ENCODE measurements at regions of chr9 and their contacts with region 1.

Region 1: DNA sequence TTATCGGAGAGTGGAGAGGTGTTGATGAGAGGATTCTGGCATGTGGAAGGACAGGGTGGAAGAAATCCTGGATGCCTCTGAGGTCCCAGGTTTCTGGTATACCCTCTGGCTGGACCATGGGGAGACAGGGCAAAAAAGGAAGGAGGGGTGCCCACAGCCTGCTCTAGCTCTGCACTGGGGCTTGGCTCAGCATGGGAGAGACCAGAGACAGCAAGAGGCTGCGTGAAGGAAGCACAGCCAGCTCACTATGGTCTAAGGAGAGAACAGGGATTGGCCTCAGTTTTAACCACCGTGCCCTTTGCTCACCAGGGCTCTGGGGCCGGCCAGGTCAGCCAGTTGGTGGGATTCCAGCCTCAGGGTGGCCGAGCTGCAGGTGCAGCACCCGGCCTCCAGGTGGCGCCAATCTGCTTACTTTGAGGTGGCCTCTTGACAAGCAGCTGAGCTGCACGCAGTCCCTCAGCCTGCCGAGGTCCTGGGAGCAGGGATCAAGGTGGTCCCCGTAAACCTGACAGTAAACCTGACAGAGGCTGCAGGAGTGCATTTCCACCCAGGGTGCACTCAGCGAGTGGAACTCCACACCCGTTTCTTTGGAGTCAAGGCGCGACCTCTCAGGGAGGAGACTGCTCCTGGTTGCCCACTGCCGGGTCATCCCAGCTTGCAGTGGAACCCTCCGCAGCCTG is 25.0 kb upstream of the SPTLC1 start:
- DNase-seq: peak; percentile 61 to 67 (median 64)
- H3K4me3 ChIP-seq: peak overlapping the region in 1 of 2 donors; percentile 23
- H3K4me3 Mint-ChIP-seq: peak overlapping the region in 6 of 8 donors; percentile 45 to 89 (median 72)
- H3K27ac ChIP-seq: no peak overlapping the region
- H3K27ac Mint-ChIP-seq: no peak overlapping the region
- H3K4me1 ChIP-seq: peaks cover 8% of the 10 kb centered on the region
- H3K4me1 Mint-ChIP-seq: peaks cover 3 to 14% (median 10%) of the 10 kb centered on the region in 4 donors
- H3K27me3 ChIP-seq: peaks cover 6% of the 10 kb centered on the region
- H3K27me3 Mint-ChIP-seq: peaks cover 33 to 43% of the 10 kb centered on the region in 2 donors

Region 2: GRCh38 chr9:92122800-92123199 is 17.4 kb before region 1 on chr9:
- CTCF ChIA-PET with region 1: interaction called, 29 read pairs
- POLR2A ChIA-PET with region 1: no interaction called
- intact Hi-C with region 1: no loop called
- DNase-seq: no peak
- H3K4me3 ChIP-seq: no peak overlapping the region
- H3K4me3 Mint-ChIP-seq: no peak overlapping the region
- H3K27ac ChIP-seq: no peak overlapping the region
- H3K27ac Mint-ChIP-seq: no peak overlapping the region
- H3K4me1 ChIP-seq: no peaks in the 10 kb centered on the region
- H3K4me1 Mint-ChIP-seq: no peaks in the 10 kb centered on the region
- H3K27me3 ChIP-seq: no peaks in the 10 kb centered on the region
- H3K27me3 Mint-ChIP-seq: peaks cover 0 to 6% of the 10 kb centered on the region in 2 donors

Region 3: GRCh38 chr9:92208693-92209524 is 68.7 kb after region 1 on chr9:
- CTCF ChIA-PET with region 1: interaction called, 10 read pairs
- POLR2A ChIA-PET with region 1: no interaction called
- intact Hi-C with region 1: no loop called
- DNase-seq: no peak
- H3K4me3 ChIP-seq: no peak overlapping the region
- H3K4me3 Mint-ChIP-seq: no peak overlapping the region
- H3K27ac ChIP-seq: no peak overlapping the region
- H3K27ac Mint-ChIP-seq: peak overlapping the region in 1 of 7 donors; percentile 43
- H3K4me1 ChIP-seq: no peaks in the 10 kb centered on the region
- H3K4me1 Mint-ChIP-seq: no peaks in the 10 kb centered on the region
- H3K27me3 ChIP-seq: no peaks in the 10 kb centered on the region
- H3K27me3 Mint-ChIP-seq: no peaks in the 10 kb centered on the region

Region 4: GRCh38 chr9:92634712-92635605 is 494.7 kb after region 1 on chr9:
- CTCF ChIA-PET with region 1: interaction called, 52 read pairs
- POLR2A ChIA-PET with region 1: no interaction called
- intact Hi-C with region 1: loop called (anchors 1 kb)
- DNase-seq: peak; percentile 40 to 54 (median 46)
- H3K4me3 ChIP-seq: no peak overlapping the region
- H3K4me3 Mint-ChIP-seq: no peak overlapping the region
- H3K27ac ChIP-seq: no peak overlapping the region
- H3K27ac Mint-ChIP-seq: peak overlapping the region in 2 of 7 donors; percentile 24 to 51
- H3K4me1 ChIP-seq: no peaks in the 10 kb centered on the region
- H3K4me1 Mint-ChIP-seq: no peaks in the 10 kb centered on the region
- H3K27me3 ChIP-seq: no peaks in the 10 kb centered on the region
- H3K27me3 Mint-ChIP-seq: no peaks in the 10 kb centered on the region

Region 5: DNA sequence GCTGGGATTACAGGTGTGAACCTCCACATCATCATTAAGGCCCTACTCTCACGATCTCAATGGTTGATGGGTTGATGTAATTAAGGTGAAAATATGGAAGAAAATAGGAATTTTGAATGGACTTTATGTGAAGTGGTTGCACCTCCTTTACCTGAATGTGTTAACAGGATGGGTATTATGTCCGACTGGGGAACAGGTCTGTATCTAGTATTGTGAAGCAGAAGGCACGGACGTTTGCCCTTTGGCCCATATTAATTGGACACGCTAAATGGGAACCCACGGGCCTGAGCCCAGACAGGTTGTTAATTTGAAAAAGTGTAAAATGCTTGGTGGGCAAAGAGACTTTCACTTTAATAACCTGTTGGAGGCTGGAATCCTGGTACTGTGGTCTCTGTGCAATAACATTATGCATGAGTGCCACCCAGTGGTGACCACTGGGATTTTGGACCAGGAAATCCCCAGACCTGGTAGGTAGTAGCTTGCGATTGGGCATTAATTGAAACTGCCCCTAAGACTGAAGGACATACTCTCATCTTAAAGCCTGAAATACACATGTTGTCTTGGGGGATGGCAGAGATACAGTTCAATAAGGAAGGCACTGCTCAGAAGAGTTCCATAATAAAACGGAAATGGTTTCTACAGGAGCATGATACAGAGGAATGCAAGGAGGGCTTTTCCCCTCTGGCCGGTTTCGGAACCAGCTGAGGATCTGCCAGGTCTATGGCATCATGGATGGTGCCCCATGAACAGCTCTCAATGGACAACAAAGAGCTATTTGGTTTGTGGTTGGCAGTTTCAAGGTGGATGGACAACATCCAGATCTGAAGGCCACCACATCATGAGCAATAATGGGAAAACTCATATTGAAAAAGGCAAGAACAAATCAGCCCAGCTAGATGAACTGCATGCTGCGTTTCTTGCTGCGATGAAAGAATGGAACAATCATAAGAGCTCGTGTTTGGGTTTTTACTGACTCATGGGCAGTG is 650.6 kb after region 1 on chr9:
- CTCF ChIA-PET with region 1: interaction called, 54 read pairs
- POLR2A ChIA-PET with region 1: interaction called, 3 read pairs
- intact Hi-C with region 1: loop called (anchors 1 kb)
- DNase-seq: peak; percentile 69 to 75 (median 72)
- H3K4me3 ChIP-seq: no peak overlapping the region
- H3K4me3 Mint-ChIP-seq: peak overlapping the region in 2 of 8 donors; percentile 35 to 40
- H3K27ac ChIP-seq: no peak overlapping the region
- H3K27ac Mint-ChIP-seq: peak overlapping the region in 4 of 7 donors; percentile 1 to 77 (median 48)
- H3K4me1 ChIP-seq: no peaks in the 10 kb centered on the region
- H3K4me1 Mint-ChIP-seq: peaks cover 3 to 9% (median 5%) of the 10 kb centered on the region in 4 donors
- H3K27me3 ChIP-seq: no peaks in the 10 kb centered on the region
- H3K27me3 Mint-ChIP-seq: peaks cover 4 to 5% of the 10 kb centered on the region in 2 donors

Measured in CD4-positive, alpha-beta memory T cell (primary cell).